CD8-positive, alpha-beta T cell (primary cell): ENCODE measurements at regions of chr12 and their contacts with region 1.

Region 1: GRCh38 chr12:98424726-98425401 is 90.5 kb upstream of the TMPO start:
- DNase-seq: peak in 8 of 9 experiments; percentile 7 to 65 (median 44)
- ATAC-seq: peak; percentile 73
- H3K4me3 ChIP-seq: no peak overlapping the region
- H3K4me3 Mint-ChIP-seq: no peak overlapping the region
- H3K27ac ChIP-seq: no peak overlapping the region
- H3K27ac Mint-ChIP-seq: no peak overlapping the region
- H3K4me1 ChIP-seq: no peaks in the 10 kb centered on the region
- H3K4me1 Mint-ChIP-seq: no peaks in the 10 kb centered on the region
- H3K27me3 ChIP-seq: no peaks in the 10 kb centered on the region
- H3K27me3 Mint-ChIP-seq: peaks cover 2% of the 10 kb centered on the region
- CTCF ChIP-seq: peak; percentile 68

Region 2: GRCh38 chr12:96489103-96490056 is 1935.5 kb before region 1 on chr12 and contains the start of gene CFAP54:
- CTCF ChIA-PET with region 1: no interaction called
- POLR2A ChIA-PET with region 1: no interaction called
- intact Hi-C with region 1: no loop called
- DNase-seq: peak; percentile 91 to 98 (median 95)
- ATAC-seq: peak; percentile 88
- H3K4me3 ChIP-seq: peak within 1 kb of the TSS; percentile 72 to 75
- H3K4me3 Mint-ChIP-seq: peak within 1 kb of the TSS; percentile 91
- H3K27ac ChIP-seq: peak within 1 kb of the TSS; percentile 58 to 76
- H3K27ac Mint-ChIP-seq: peak within 1 kb of the TSS; percentile 82
- H3K4me1 ChIP-seq: peaks cover 23% of the 10 kb centered on the region
- H3K4me1 Mint-ChIP-seq: peaks cover 24% of the 10 kb centered on the region
- H3K27me3 ChIP-seq: no peaks in the 10 kb centered on the region
- H3K27me3 Mint-ChIP-seq: no peaks in the 10 kb centered on the region
- CTCF ChIP-seq: peak; percentile 85
- total RNA-seq, gene CFAP54: 1.0 to 1.2 TPM

Region 3: DNA sequence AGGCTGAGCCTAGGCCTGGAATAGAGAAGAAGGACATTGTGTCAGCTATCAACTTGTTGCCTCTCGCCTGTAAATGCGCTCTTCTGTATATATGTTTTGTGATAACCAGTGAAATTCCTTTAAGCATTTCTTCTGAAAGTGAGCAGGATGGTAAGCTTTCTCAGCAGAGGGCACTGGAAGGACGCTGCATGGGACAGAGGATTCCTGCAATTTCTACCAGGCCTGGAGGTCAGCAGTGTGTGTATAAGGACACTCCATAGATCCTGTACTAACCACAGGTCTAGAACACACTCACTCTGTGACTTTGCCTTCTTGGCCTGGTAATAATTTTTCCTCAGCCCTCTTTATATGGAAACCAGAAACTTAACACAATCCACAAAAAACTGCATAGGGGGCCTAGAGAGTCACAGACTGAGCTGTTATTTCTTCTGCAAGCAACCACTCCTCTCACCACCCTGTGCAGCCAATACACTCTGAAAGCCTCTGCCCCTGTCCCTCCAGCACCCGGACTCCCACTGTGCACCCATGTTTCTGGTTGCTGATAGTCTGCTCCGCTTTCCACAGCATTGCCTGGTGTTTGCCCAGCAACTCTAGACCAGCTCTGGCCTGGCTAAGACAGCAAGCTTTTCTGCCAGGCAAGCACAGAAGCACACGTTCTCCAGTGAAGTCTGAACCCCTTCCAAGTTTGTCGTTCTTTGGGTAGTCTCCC is 1056.3 kb before region 1 on chr12:
- CTCF ChIA-PET with region 1: no interaction called
- POLR2A ChIA-PET with region 1: no interaction called
- intact Hi-C with region 1: no loop called
- DNase-seq: no peak
- ATAC-seq: no peak
- H3K4me3 ChIP-seq: no peak overlapping the region
- H3K4me3 Mint-ChIP-seq: no peak overlapping the region
- H3K27ac ChIP-seq: no peak overlapping the region
- H3K27ac Mint-ChIP-seq: no peak overlapping the region
- H3K4me1 ChIP-seq: no peaks in the 10 kb centered on the region
- H3K4me1 Mint-ChIP-seq: no peaks in the 10 kb centered on the region
- H3K27me3 ChIP-seq: no peaks in the 10 kb centered on the region
- H3K27me3 Mint-ChIP-seq: peaks cover 2% of the 10 kb centered on the region
- CTCF ChIP-seq: no peak

Region 4: DNA sequence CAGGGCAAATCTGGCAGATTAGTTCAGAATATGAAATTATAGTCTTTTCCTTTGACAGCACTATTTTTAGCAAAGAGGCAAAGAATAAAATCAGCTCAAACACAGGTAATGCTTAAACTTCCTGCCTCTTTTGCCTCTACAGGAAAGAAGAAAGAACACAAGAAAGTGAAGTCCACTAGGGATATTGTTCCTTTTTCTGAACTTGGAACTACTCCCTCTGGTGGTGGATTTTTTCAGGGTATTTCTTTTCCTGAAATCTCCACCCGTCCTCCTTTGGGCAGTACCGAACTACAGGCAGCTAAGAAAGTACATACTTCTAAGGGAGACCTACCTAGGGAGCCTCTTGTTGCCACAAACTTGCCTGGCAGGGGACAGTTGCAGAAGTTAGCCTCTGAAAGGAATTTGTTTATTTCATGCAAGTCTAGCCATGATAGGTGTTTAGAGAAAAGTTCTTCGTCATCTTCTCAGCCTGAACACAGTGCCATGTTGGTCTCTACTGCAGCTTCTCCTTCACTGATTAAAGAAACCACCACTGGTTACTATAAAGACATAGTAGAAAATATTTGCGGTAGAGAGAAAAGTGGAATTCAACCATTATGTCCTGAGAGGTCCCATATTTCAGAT is 107.9 kb after region 1 on chr12:
- CTCF ChIA-PET with region 1: interaction called, 6 read pairs
- POLR2A ChIA-PET with region 1: no interaction called
- intact Hi-C with region 1: loop called (anchors 2 to 5 kb)
- DNase-seq: peak in 3 of 9 experiments; percentile 12 to 67 (median 54)
- ATAC-seq: peak; percentile 40
- H3K4me3 ChIP-seq: no peak overlapping the region
- H3K4me3 Mint-ChIP-seq: no peak overlapping the region
- H3K27ac ChIP-seq: no peak overlapping the region
- H3K27ac Mint-ChIP-seq: peak overlapping the region; percentile 41
- H3K4me1 ChIP-seq: no peaks in the 10 kb centered on the region
- H3K4me1 Mint-ChIP-seq: peaks cover 13% of the 10 kb centered on the region
- H3K27me3 ChIP-seq: no peaks in the 10 kb centered on the region
- H3K27me3 Mint-ChIP-seq: no peaks in the 10 kb centered on the region
- CTCF ChIP-seq: peak; percentile 59

Region 5: GRCh38 chr12:98653866-98654493 is 229.1 kb after region 1 on chr12:
- CTCF ChIA-PET with region 1: interaction called, 3 read pairs
- POLR2A ChIA-PET with region 1: no interaction called
- intact Hi-C with region 1: loop called in 1 of 2 experiments (anchors 5 kb)
- DNase-seq: peak in 2 of 9 experiments; percentile 65 to 76
- ATAC-seq: peak; percentile 57
- H3K4me3 ChIP-seq: no peak overlapping the region
- H3K4me3 Mint-ChIP-seq: no peak overlapping the region
- H3K27ac ChIP-seq: no peak overlapping the region
- H3K27ac Mint-ChIP-seq: no peak overlapping the region
- H3K4me1 ChIP-seq: no peaks in the 10 kb centered on the region
- H3K4me1 Mint-ChIP-seq: peaks cover 9% of the 10 kb centered on the region
- H3K27me3 ChIP-seq: no peaks in the 10 kb centered on the region
- H3K27me3 Mint-ChIP-seq: no peaks in the 10 kb centered on the region
- CTCF ChIP-seq: peak; percentile 84